ENCODE measurements at regions of chr3 and their contacts with region 1.

Region 1: DNA sequence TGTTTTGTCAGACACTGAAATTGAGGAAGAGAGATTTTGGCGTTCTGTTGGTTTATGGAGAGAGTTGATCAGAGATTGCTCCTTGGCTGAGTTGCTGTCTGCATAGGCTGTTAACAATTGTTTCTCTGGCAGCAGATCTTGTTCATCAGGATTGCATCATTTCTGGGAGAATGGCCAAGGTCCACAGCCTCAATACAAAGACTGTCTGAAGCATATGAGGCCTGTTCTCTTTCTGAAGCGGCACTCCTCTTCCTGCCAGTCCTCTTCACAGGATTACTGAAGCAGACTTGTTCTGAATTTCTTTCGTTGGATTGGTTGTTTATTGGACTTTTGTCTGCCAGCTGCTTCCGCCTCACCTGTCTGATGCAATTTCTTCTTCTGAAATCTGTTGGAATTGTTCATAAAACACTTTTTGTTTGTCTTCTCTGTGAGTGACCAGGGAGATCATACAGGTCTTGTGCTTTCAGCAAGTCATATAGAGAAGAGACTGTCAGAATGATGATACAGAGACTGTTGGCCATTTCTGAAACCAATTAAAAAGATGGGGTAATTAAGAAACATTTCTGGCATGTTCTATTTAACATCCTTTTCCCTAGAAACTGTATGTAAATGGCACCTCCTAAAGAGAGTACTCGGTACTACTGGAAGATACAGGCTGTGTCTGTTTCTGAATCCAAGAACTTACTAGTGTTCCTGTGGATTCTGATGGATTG is 25.5 kb downstream of the SETD5 start:
- DNase-seq: peak; percentile 99
- H3K4me3 ChIP-seq: peak overlapping the region in 1 of 3 experiments; percentile 40
- H3K27ac ChIP-seq: peak overlapping the region; percentile 97
- H3K4me1 ChIP-seq: peaks cover 45% of the 10 kb centered on the region
- H3K27me3 ChIP-seq: no peaks in the 10 kb centered on the region
- CTCF ChIP-seq: peak; percentile 39 to 50
- POLR2A ChIP-seq: peak; percentile 52

Region 2: DNA sequence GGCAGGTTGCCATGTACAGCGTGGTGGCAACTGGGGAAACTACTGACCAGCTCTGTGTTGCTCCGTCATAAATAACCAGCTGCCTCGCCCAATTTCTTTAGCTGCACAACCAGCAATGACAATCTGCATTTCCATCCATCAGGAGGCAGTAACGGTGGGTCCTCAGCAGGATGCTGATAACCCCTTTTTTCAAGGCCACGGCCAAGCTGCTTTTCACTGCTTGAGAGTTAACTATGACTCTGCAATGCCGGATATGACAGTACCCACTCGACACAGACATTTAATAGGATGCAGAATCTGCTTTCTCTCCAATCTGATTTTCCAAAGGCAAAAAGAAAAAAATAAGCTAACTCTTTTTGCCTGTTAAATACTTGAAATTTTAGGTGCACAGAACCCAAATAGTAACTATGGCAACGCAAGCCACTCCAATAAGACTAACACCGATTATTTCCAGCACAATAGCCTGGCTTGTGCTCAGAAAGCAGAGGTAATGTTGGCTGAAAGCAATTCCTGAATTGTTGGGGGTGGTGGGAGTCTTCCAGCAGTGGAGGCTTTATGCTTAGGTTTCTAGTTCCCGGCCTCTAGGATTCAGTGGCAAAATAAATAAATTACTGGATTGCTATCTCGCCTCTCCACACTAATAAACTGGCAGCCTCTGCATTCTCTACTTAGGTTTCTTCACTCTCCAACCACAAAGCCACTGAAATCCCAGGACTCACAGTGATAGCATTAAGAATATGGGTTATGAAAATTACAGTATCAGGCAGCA is 142.2 kb before region 1 on chr3:
- CTCF ChIA-PET with region 1: no interaction called
- POLR2A ChIA-PET with region 1: no interaction called
- dilution Hi-C with region 1: no loop called
- intact Hi-C with region 1: no loop called
- DNase-seq: no peak
- H3K4me3 ChIP-seq: no peak overlapping the region
- H3K27ac ChIP-seq: no peak overlapping the region
- H3K4me1 ChIP-seq: no peaks in the 10 kb centered on the region
- H3K27me3 ChIP-seq: no peaks in the 10 kb centered on the region
- CTCF ChIP-seq: no peak
- POLR2A ChIP-seq: no peak

Region 3: DNA sequence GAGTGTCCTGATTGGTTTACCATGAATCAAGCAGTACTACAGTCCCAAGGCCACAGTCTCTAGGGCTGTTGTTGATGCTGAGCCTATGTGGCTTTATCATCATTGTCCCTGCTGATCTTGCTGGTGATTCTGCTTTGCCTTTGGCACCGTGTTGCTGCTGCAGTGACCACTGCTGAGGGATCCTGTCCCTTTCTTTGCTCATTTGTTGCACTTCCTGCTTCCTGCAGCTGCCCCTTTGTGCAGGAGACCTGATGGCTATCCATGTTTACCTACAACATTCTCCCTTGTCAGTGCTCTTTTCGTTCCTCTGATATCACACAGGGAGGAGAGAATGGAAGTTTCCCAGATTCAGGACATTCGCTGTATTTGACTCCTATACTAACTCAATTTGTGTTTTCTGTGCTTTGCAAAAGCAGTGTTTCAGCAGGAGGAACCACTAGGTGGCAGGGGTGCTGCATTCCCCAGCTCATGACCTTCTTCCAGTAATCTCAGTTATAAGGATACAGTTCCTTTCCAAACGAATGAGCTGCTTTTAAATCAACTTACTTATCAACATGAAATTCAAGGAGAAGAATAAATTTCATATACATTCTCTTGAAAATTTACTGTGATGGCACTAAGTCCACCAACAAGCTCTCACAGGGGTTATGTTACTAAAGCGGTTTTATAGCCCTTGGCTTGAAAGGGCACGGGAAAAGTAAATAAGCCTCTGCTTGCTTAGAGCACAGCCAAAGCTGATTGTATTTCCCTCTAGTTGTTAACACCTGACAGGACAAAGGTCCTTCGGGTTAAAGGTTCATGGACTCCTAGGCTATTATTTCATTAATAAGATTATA is 69.7 kb before region 1 on chr3:
- CTCF ChIA-PET with region 1: interaction called, 15 read pairs
- POLR2A ChIA-PET with region 1: no interaction called
- dilution Hi-C with region 1: no loop called
- intact Hi-C with region 1: loop called (anchors 1 kb)
- DNase-seq: peak; percentile 81
- H3K4me3 ChIP-seq: no peak overlapping the region
- H3K27ac ChIP-seq: no peak overlapping the region
- H3K4me1 ChIP-seq: peaks cover 11% of the 10 kb centered on the region
- H3K27me3 ChIP-seq: no peaks in the 10 kb centered on the region
- CTCF ChIP-seq: peak; percentile 86 to 92
- POLR2A ChIP-seq: no peak

Region 4: DNA sequence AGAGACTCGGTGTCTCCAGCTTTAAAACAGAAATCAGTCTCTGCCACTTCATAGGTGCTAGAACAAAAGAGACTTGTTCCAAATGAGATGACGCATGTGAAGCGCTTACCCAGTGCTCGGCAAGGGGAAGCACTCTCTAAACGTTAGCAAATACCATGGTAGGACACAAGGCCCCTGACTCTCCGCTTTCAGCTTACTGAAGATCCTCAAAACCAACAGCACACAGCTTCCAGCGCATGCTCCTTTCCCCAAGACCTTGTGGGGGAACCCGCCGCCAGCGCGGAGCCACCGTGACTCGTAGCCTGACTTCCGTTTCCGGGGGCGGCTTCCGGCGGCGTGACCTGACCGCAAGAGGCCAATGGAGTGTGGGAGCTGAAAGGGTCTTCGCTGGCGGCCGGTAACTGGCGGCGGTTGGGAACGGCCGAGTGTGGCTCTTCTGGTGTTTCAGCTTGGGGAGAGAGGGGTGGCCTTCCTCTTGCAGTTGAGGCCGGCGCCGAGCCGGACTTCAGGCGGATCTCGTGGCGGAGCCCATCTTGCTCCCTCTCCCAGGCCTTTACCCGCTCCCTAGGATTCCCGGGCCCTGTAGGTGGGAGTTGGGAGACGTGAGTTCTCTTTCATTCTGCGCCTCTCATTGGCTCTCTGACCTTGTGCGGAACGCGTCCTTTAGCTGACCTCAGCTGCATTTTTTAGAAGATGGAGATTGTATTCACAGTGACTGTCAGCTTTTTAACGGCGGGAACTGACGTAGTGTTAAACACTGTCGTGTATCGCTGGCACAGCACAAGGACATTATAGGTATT is 59.9 kb before region 1 on chr3 and contains the start of gene THUMPD3:
- CTCF ChIA-PET with region 1: interaction called, 10 read pairs
- POLR2A ChIA-PET with region 1: no interaction called
- dilution Hi-C with region 1: no loop called
- intact Hi-C with region 1: loop called (anchors 1 kb)
- DNase-seq: peak; percentile 90
- H3K4me3 ChIP-seq: peak within 1 kb of the TSS; percentile 50 to 72 (median 55)
- H3K27ac ChIP-seq: peak within 1 kb of the TSS; percentile 97
- H3K4me1 ChIP-seq: peaks cover 7% of the 10 kb centered on the region
- H3K27me3 ChIP-seq: no peaks in the 10 kb centered on the region
- CTCF ChIP-seq: no peak
- POLR2A ChIP-seq: peak; percentile 95
- total RNA-seq, gene THUMPD3: 22.7 and 26.5 TPM in 2 replicates

Region 5: DNA sequence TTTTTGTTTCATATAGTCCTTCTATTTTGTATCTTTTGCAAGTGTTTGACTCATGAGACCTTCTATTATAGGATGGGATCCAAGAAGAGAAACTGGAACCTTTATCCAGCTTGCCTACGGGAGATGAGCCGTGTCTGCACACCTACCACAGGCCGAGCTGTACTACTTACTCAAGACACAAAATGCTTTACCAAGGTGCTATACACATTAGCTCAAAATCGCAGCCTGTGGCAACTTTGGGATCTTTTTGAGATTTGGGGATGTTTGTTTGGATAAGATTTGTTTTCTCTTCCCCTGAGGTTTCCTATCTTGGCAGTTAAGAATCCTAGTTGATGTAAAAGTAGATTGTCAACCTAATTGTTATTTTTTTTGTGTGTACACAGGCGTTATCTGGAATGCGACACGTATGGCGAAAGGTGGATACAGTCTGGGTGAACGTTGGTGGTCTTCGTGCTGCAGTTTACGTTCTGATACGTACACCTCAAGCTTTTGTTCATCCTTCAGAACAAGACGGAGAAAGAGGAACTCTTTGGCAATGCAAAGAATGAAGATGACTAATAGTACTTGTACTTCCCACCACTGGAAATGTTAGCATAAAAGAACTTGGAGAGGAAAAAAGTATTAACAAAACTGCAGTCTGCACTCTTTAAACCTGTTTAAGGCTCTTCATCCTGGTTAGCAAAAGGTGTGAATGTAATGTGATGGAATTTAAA is 38.6 kb before region 1 on chr3:
- CTCF ChIA-PET with region 1: no interaction called
- POLR2A ChIA-PET with region 1: no interaction called
- dilution Hi-C with region 1: no loop called
- intact Hi-C with region 1: loop called (anchors 5 kb)
- DNase-seq: no peak
- H3K4me3 ChIP-seq: no peak overlapping the region
- H3K27ac ChIP-seq: no peak overlapping the region
- H3K4me1 ChIP-seq: no peaks in the 10 kb centered on the region
- H3K27me3 ChIP-seq: no peaks in the 10 kb centered on the region
- CTCF ChIP-seq: no peak
- POLR2A ChIP-seq: no peak

Region 6: GRCh38 chr3:9396700-9397521 is 26.0 kb before region 1 on chr3:
- CTCF ChIA-PET with region 1: interaction called, 29 read pairs
- POLR2A ChIA-PET with region 1: interaction called, 36 read pairs
- dilution Hi-C with region 1: no loop called
- intact Hi-C with region 1: loop called (anchors 1 kb)
- DNase-seq: peak; percentile 99
- H3K4me3 ChIP-seq: peak overlapping the region; percentile 8 to 93 (median 43)
- H3K27ac ChIP-seq: peak overlapping the region; percentile 93
- H3K4me1 ChIP-seq: peaks cover 56% of the 10 kb centered on the region
- H3K27me3 ChIP-seq: no peaks in the 10 kb centered on the region
- CTCF ChIP-seq: no peak
- POLR2A ChIP-seq: peak; percentile 84

Region 7: GRCh38 chr3:9402410-9403228 is 20.2 kb before region 1 on chr3:
- CTCF ChIA-PET with region 1: interaction called, 29 read pairs
- POLR2A ChIA-PET with region 1: interaction called, 36 read pairs
- dilution Hi-C with region 1: no loop called
- intact Hi-C with region 1: no loop called
- DNase-seq: no peak
- H3K4me3 ChIP-seq: no peak overlapping the region
- H3K27ac ChIP-seq: peak overlapping the region; percentile 12
- H3K4me1 ChIP-seq: peaks cover 46% of the 10 kb centered on the region
- H3K27me3 ChIP-seq: no peaks in the 10 kb centered on the region
- CTCF ChIP-seq: no peak
- POLR2A ChIP-seq: no peak

Region 8: DNA sequence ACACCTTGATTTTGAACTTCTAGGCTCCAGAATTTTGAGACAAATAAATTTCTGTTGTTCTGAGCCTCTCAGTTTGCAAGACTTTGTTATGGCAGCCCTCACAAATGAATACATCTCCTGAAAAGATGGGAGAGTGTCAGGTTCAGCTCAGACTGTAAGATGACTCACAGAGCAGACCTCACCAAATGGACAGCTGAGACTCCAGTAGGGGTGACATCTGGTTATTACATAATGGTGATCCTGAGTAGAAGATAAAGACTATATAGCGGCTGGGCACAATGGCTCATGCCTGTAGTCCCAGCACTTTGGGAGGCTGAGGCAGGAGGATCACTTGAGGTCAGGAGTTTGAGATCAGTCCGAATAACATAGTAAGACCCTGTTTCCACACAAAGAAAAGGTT is 200.3 kb after region 1 on chr3:
- CTCF ChIA-PET with region 1: no interaction called
- POLR2A ChIA-PET with region 1: no interaction called
- dilution Hi-C with region 1: no loop called
- intact Hi-C with region 1: no loop called
- DNase-seq: no peak
- H3K4me3 ChIP-seq: no peak overlapping the region
- H3K27ac ChIP-seq: no peak overlapping the region
- H3K4me1 ChIP-seq: no peaks in the 10 kb centered on the region
- H3K27me3 ChIP-seq: no peaks in the 10 kb centered on the region
- CTCF ChIP-seq: no peak
- POLR2A ChIP-seq: no peak

Measured in endothelial cell of umbilical vein (primary cell).